ENCODE measurements at regions of chr13 and their contacts with region 1.

Region 1: GRCh38 chr13:97018029-97018831 is 24.0 kb upstream of the OXGR1 start:
- DNase-seq: peak; percentile 70
- H3K4me3 ChIP-seq: no peak overlapping the region
- H3K27ac ChIP-seq: no peak overlapping the region
- H3K4me1 ChIP-seq: no peaks in the 10 kb centered on the region
- H3K27me3 ChIP-seq: peaks cover 14 to 18% of the 10 kb centered on the region in 2 experiments
- CTCF ChIP-seq: peak; percentile 71 to 78
- POLR2A ChIP-seq: no peak

Region 2: GRCh38 chr13:96984051-96984508 is 34.1 kb before region 1 on chr13:
- CTCF ChIA-PET with region 1: interaction called, 17 read pairs
- POLR2A ChIA-PET with region 1: no interaction called
- dilution Hi-C with region 1: no loop called
- intact Hi-C with region 1: no loop called
- DNase-seq: peak; percentile 75
- H3K4me3 ChIP-seq: peak overlapping the region in 1 of 3 experiments; percentile 29
- H3K27ac ChIP-seq: no peak overlapping the region
- H3K4me1 ChIP-seq: peaks cover 21% of the 10 kb centered on the region
- H3K27me3 ChIP-seq: peaks cover 17 to 18% of the 10 kb centered on the region in 2 experiments
- CTCF ChIP-seq: peak in 1 of 2 donors; percentile 12
- POLR2A ChIP-seq: no peak

Region 3: DNA sequence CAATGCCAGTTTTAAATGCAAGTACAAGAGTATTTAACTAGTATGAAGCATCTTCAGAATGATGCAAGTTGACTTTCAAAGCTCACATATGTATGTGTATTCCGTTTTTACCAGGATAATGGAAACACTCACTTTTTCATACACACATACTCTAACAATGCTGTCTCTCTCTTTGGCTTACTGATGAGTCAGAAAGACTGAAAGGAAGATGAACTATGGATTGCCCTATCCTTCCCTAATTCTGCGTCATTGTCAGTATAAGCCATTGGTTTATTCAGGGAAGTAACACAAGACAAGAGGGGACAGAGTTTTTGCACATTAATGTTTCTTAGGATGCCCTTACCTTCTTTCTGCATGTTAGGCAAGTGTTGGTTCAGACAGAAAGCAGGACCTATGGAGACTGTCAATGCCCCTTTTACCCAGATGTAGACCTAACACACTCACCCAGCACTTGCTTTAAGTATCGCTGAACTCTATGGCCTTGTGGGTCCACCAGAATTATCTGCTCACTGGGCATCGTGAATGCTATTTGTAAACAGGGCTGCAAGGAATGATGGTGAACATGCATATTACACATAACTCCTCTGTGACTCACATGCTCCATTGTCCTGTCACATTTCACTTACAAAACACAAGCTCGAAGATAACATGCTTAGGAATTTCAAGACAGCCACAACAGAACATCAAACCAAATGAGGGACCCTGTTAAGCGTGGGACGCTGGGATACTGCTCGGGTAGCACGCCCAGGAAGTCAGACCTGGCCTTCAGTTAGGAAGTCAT is 13.9 kb before region 1 on chr13:
- CTCF ChIA-PET with region 1: interaction called, 24 read pairs
- POLR2A ChIA-PET with region 1: no interaction called
- dilution Hi-C with region 1: no loop called
- intact Hi-C with region 1: no loop called
- DNase-seq: no peak
- H3K4me3 ChIP-seq: no peak overlapping the region
- H3K27ac ChIP-seq: no peak overlapping the region
- H3K4me1 ChIP-seq: no peaks in the 10 kb centered on the region
- H3K27me3 ChIP-seq: peaks cover 18 to 35% of the 10 kb centered on the region in 2 experiments
- CTCF ChIP-seq: no peak
- POLR2A ChIP-seq: no peak

Region 4: DNA sequence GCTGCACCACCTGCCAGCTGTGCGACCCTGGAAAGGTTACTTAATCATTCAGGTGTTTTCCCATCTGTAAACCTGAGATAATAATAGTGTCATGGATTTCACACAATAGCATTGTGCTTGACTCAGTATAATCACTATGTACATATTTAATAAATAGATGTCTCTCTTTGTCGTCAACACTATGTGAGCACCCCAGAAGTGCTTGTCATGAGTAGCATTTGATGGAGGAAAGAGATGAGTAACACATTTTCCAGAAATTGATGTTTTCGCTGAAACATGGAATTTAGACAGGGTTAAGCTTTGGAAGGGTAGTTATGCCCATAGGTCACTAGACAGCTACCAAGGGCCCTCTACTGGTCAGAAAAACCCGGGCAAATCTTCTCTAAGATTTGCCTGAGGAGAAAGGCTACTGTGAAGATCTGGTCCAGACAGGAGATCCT is 194.4 kb after region 1 on chr13:
- CTCF ChIA-PET with region 1: interaction called, 14 read pairs
- POLR2A ChIA-PET with region 1: no interaction called
- dilution Hi-C with region 1: no loop called
- intact Hi-C with region 1: no loop called
- DNase-seq: peak; percentile 56
- H3K4me3 ChIP-seq: no peak overlapping the region
- H3K27ac ChIP-seq: no peak overlapping the region
- H3K4me1 ChIP-seq: no peaks in the 10 kb centered on the region
- H3K27me3 ChIP-seq: no peaks in the 10 kb centered on the region
- CTCF ChIP-seq: peak; percentile 52 to 72
- POLR2A ChIP-seq: no peak

Region 5: GRCh38 chr13:97432917-97433726 is 414.9 kb after region 1 on chr13:
- CTCF ChIA-PET with region 1: interaction called, 10 read pairs
- POLR2A ChIA-PET with region 1: interaction called, 3 read pairs
- dilution Hi-C with region 1: no loop called
- intact Hi-C with region 1: no loop called
- DNase-seq: peak; percentile 100
- H3K4me3 ChIP-seq: peak overlapping the region; percentile 70 to 87 (median 76)
- H3K27ac ChIP-seq: peak overlapping the region; percentile 95
- H3K4me1 ChIP-seq: peaks cover 17% of the 10 kb centered on the region
- H3K27me3 ChIP-seq: no peaks in the 10 kb centered on the region
- CTCF ChIP-seq: no peak
- POLR2A ChIP-seq: peak; percentile 90

Region 6: DNA sequence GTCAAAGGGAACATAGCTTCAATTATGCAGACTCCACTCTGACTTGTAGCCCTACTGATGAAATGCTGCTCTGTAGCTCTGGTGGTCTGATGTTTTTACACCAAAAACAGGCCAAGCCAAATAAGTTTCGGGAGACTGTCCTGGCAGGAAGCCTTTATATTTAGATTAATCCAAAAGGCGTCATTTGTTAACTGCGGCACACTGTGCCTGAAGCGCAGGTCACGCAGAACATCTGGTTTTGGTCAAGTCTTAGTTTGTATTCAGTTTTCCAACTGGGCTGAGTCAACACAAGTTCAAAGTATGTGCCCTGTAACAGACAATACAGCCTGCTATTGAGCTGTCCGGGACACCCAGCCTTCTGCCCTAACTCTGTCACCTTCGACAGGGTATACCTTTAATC is 780.6 kb after region 1 on chr13:
- CTCF ChIA-PET with region 1: interaction called, 69 read pairs
- POLR2A ChIA-PET with region 1: no interaction called
- dilution Hi-C with region 1: no loop called
- intact Hi-C with region 1: loop called (anchors 1 kb)
- DNase-seq: no peak
- H3K4me3 ChIP-seq: no peak overlapping the region
- H3K27ac ChIP-seq: no peak overlapping the region
- H3K4me1 ChIP-seq: no peaks in the 10 kb centered on the region
- H3K27me3 ChIP-seq: peaks cover 0 to 3% of the 10 kb centered on the region in 2 experiments
- CTCF ChIP-seq: no peak
- POLR2A ChIP-seq: no peak

Region 7: DNA sequence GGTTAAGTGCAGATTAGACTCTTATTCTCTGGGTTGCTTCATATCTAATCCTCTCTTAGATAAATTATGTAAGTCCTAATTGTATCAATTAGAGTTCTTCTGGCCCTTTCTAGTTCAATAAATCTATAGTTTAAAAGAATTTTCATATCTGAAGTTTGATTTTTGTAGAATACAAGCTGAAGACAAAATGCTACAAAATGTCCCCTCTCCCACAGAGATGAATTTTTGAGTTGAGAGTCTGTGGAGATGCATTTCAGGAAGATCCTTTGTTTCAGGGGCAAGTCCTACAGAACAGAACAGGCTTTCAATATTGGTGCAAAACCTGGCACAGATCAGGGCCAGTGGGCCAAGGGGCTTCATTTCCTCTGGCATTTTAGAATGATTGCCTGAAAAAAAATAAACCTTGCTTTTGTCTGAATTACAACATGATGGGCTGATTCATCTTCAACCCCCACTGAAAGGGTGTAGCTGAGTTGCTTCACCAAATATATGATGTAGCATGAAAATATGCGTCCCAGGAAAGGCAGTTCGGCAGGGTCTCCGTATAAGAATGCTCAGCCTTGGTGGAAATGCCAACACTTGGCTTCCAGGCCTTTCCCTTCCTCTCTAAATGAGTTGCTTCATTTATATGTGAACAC is 928.8 kb after region 1 on chr13:
- CTCF ChIA-PET with region 1: no interaction called
- POLR2A ChIA-PET with region 1: no interaction called
- dilution Hi-C with region 1: no loop called
- intact Hi-C with region 1: no loop called
- DNase-seq: no peak
- H3K4me3 ChIP-seq: no peak overlapping the region
- H3K27ac ChIP-seq: no peak overlapping the region
- H3K4me1 ChIP-seq: no peaks in the 10 kb centered on the region
- H3K27me3 ChIP-seq: no peaks in the 10 kb centered on the region
- CTCF ChIP-seq: no peak
- POLR2A ChIP-seq: no peak

Measured in endothelial cell of umbilical vein (primary cell).